ENCODE measurements at regions of chr2 and their contacts with region 1.

Region 1: DNA sequence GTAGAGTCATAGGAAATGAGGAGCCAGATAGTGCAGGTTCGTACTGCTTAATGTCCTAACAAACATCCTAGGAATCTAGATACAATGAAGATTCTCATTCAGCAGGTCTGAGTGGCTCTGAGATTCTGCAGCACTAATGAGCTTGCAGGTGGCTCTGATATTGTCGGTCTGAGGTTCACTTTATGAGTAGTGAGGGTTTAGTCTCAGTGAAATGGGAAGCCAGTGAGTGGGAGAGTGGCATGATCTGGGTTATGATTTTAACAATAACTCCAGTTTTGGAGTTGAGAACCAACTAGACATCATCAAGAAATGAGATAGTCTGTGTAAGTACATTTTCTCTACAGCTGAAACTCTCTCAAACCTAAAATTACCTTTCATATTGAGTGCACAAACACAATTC is 166.8 kb upstream of the SP5 start:
- DNase-seq: no peak
- ATAC-seq: peak; percentile 81
- H3K4me3 ChIP-seq: no peak overlapping the region
- H3K27ac ChIP-seq: no peak overlapping the region
- H3K4me1 ChIP-seq: no peaks in the 10 kb centered on the region
- H3K27me3 ChIP-seq: no peaks in the 10 kb centered on the region
- CTCF ChIP-seq: no peak
- EP300 ChIP-seq: peak in 1 of 2 experiments; percentile 40; a peak in 1 of 4 replicates
- POLR2A ChIP-seq: no peak
- RAD21 ChIP-seq: no peak

Region 2: DNA sequence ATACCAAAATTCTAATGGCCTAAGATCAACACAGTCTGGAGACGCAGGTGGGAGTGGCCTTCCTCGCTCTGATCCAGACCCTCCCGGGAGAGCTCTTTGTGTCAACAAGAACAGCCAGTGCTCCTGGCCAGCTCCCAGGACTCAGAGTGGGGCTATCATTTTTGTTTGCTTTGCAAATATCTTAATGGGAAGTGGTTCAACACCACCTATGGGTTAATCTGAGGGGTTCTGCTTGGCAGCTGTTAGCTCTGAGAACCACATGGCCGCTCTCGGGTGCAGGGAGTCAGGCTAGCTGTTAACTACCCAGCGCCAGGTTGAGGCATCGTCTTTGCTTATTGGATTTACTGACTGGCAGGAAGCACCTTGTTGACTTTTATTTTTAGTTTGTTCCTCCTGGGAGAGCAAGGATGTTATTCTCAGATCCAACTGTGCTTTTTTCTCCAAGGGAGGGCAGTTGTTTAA is 18.0 kb before region 1 on chr2:
- CTCF ChIA-PET with region 1: interaction called, 5 read pairs
- POLR2A ChIA-PET with region 1: interaction called, 6 read pairs
- RAD21 ChIA-PET with region 1: interaction called, 10 read pairs
- SMC1A ChIA-PET with region 1: interaction called, 10 read pairs
- in situ Hi-C with region 1: no loop called
- intact Hi-C with region 1: no loop called
- DNase-seq: no peak
- ATAC-seq: peak; percentile 13; the same call in 2 of the 3 replicates
- H3K4me3 ChIP-seq: no peak overlapping the region
- H3K27ac ChIP-seq: no peak overlapping the region
- H3K4me1 ChIP-seq: peaks cover 4% of the 10 kb centered on the region; the same call in 1 of the 2 replicates
- H3K27me3 ChIP-seq: no peaks in the 10 kb centered on the region
- CTCF ChIP-seq: no peak
- EP300 ChIP-seq: no peak
- POLR2A ChIP-seq: no peak
- RAD21 ChIP-seq: no peak

Region 3: GRCh38 chr2:170598067-170598395 is 49.7 kb after region 1 on chr2:
- CTCF ChIA-PET with region 1: no interaction called
- POLR2A ChIA-PET with region 1: interaction called, 10 read pairs
- RAD21 ChIA-PET with region 1: no interaction called
- SMC1A ChIA-PET with region 1: interaction called, 3 read pairs
- in situ Hi-C with region 1: no loop called
- intact Hi-C with region 1: no loop called
- DNase-seq: no peak
- ATAC-seq: no peak
- H3K4me3 ChIP-seq: no peak overlapping the region
- H3K27ac ChIP-seq: no peak overlapping the region
- H3K4me1 ChIP-seq: no peaks in the 10 kb centered on the region
- H3K27me3 ChIP-seq: no peaks in the 10 kb centered on the region
- CTCF ChIP-seq: no peak
- EP300 ChIP-seq: no peak
- POLR2A ChIP-seq: no peak
- RAD21 ChIP-seq: no peak

Region 4: GRCh38 chr2:170822290-170823087 is 274.2 kb after region 1 on chr2:
- CTCF ChIA-PET with region 1: no interaction called
- POLR2A ChIA-PET with region 1: no interaction called
- RAD21 ChIA-PET with region 1: no interaction called
- SMC1A ChIA-PET with region 1: no interaction called
- in situ Hi-C with region 1: no loop called
- intact Hi-C with region 1: no loop called
- DNase-seq: no peak
- ATAC-seq: 0 out of 3 replicates have a peak, but pooled peaks have one; percentile 7
- H3K4me3 ChIP-seq: no peak overlapping the region
- H3K27ac ChIP-seq: no peak overlapping the region
- H3K4me1 ChIP-seq: peaks cover 10% of the 10 kb centered on the region
- H3K27me3 ChIP-seq: peaks cover 8 to 50% of the 10 kb centered on the region in 2 experiments
- CTCF ChIP-seq: peak in 2 of 3 experiments; percentile 21 to 26; a peak in 2 of 6 replicates
- EP300 ChIP-seq: no peak
- POLR2A ChIP-seq: no peak
- RAD21 ChIP-seq: no peak